Psoas muscle (tissue), 8 donors: ENCODE measurements at regions of chr11 and their contacts with region 1.

Region 1: GRCh38 chr11:73184953-73185671 is 33.0 kb upstream of the P2RY2 start:
- DNase-seq: peak; percentile 74 to 88
- ATAC-seq: peak; percentile 73 to 85 (median 80)
- H3K4me3 ChIP-seq: no peak overlapping the region
- H3K27ac ChIP-seq: peak overlapping the region; percentile 76
- H3K4me1 ChIP-seq: peaks cover 38% of the 10 kb centered on the region
- H3K27me3 ChIP-seq: no peaks in the 10 kb centered on the region
- CTCF ChIP-seq: peak; percentile 86

Region 2: GRCh38 chr11:72848846-72849466 is 336.2 kb before region 1 on chr11:
- intact Hi-C with region 1: no loop called
- DNase-seq: no peak
- ATAC-seq: peak in 1 of 4 donors; percentile 58
- H3K4me3 ChIP-seq: no peak overlapping the region
- H3K27ac ChIP-seq: no peak overlapping the region
- H3K4me1 ChIP-seq: no peaks in the 10 kb centered on the region
- H3K27me3 ChIP-seq: no peaks in the 10 kb centered on the region
- CTCF ChIP-seq: peak; percentile 50

Region 3: DNA sequence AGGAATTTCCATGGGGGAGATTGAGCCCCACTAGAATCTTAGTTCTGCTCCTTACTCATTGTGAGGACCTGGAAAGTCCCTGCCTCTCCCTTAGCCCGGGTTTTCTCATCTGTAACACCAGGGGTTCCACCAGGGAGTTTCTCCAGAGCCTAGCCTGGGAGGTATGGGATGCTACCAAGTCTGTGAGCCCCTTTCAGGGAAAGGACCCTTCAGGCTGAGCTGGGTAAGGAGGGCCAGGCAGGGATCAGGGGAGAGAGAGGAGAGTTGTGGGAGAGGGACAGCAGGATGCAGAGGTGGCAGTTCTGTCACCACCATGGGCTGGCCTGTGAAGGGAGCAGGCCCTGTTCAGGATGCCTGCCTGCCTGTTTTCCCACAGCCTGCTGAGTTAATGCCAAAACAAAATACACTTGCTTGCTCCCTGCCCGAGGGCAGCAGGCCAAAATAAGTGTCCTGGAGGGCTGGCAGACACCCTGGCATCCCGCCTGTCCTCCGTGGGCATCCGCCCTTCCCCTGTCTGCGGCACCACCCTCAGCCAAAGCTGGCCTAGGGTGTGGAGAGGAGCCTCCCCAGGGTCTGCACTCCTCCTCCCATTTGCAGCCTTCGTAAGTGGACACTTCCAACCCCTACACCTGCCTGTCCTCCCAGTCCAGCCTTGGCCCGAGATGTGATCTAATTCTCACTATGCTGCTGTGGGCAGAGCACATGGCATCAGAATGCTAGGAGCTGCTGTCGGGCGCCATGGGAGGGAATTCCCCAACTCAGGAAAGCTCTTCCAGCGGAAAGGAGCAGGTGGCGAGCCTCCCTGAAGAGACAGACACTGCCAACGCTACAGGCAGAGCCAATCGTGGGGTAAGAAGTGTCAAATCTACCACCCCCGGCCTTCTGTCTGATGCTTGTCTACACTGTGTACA is 37.1 kb before region 1 on chr11:
- intact Hi-C with region 1: loop called in 1 of 2 experiments (anchors 5 kb)
- DNase-seq: peak; percentile 48 to 82
- ATAC-seq: peak; percentile 72 to 86 (median 82)
- H3K4me3 ChIP-seq: peak overlapping the region; percentile 15
- H3K27ac ChIP-seq: peak overlapping the region; percentile 83
- H3K4me1 ChIP-seq: peaks cover 46% of the 10 kb centered on the region
- H3K27me3 ChIP-seq: no peaks in the 10 kb centered on the region
- CTCF ChIP-seq: no peak

Region 4: DNA sequence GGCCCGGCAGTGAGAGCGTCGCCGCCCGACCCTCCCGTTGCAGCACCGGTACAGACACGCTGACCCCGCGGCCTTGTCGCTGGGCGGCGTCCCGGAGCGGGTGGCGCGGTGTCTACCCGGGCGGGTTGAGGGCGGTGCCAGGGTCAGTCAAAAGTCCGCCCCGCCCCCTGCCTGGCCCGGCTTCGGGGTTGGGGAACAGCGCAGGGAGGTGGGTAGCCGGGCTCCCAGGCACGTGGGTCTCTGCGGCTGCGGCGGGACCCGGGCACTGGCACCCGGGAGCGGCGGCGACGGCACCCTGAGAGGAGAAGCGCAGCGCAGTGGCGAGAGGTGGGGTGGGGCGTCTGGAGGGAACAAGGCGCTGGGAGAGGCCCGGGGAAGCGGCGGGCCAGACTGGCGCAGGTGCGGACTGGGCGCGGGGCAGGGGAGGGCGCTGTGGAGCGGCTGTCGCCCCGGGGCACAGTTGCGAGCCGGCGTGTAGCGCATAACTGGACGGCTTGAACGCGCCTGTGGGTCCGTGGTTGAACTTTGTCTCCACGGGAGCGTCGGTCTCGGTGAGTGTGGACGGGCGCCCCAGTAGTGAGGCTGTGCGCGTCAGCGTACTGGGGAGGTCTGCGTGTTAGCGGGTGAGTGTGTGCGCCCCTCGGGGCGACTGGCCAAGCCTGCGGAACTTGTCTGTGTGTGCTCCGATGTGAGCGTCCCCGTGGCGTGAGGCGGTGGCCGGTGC is 33.2 kb after region 1 on chr11 and contains the start of gene P2RY2:
- intact Hi-C with region 1: no loop called
- DNase-seq: peak; percentile 91 to 95
- ATAC-seq: peak; percentile 77 to 81 (median 80)
- H3K4me3 ChIP-seq: peak within 1 kb of the TSS; percentile 82
- H3K27ac ChIP-seq: peak within 1 kb of the TSS; percentile 95
- H3K4me1 ChIP-seq: peaks cover 73% of the 10 kb centered on the region
- H3K27me3 ChIP-seq: no peaks in the 10 kb centered on the region
- CTCF ChIP-seq: peak; percentile 52
- total RNA-seq, gene P2RY2: 18.7 to 90.9 (median 43.8) TPM

Region 5: DNA sequence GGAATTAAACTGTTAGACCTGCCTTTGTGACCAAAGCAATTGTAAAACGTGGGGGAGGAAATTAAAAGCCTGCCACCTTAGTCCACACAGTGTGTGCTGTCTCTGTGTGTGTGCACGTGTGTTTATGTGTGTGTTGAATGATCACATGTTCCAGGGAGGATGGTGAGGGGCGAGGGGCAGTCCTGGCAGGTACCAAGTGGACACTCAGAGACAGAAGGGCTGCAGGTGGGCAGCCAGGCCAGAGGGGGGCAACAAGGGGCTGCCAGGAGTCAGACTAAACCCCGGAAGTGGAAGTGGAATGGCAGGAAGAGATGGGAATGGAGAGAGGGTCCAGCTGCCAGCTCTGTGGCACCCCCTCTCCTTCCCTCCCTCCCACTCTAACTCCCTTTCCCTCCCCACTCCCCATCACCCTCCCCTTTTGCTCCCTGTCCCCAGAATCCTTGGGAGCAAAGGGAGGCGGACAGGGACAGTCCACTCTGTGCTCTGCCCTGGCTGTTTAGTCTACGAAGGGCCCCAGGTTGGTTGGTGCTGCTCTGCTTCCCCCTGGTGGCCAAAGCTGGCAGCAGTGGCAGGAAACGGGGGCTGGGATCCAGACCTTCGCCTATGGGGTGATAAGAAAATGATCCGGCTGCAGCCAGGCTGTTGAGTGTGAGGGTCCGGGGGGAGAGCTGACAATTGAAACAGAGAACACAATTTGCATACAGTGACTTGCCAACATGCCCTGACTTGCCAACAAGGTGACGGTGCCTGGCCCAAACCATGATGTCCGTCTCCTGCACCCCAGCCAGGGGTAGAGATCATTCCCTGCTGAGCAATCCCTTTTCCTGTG is 57.4 kb after region 1 on chr11:
- intact Hi-C with region 1: loop called (anchors 1 to 2 kb)
- DNase-seq: peak; percentile 80 to 90
- ATAC-seq: peak; percentile 19 to 49 (median 40)
- H3K4me3 ChIP-seq: no peak overlapping the region
- H3K27ac ChIP-seq: peak overlapping the region; percentile 53
- H3K4me1 ChIP-seq: peaks cover 42% of the 10 kb centered on the region
- H3K27me3 ChIP-seq: no peaks in the 10 kb centered on the region
- CTCF ChIP-seq: peak; percentile 80

Region 6: GRCh38 chr11:73252577-73253195 is 67.6 kb after region 1 on chr11:
- intact Hi-C with region 1: no loop called
- DNase-seq: peak in 1 of 2 donors; percentile 28
- ATAC-seq: no peak
- H3K4me3 ChIP-seq: no peak overlapping the region
- H3K27ac ChIP-seq: no peak overlapping the region
- H3K4me1 ChIP-seq: peaks cover 14% of the 10 kb centered on the region
- H3K27me3 ChIP-seq: no peaks in the 10 kb centered on the region
- CTCF ChIP-seq: no peak

Region 7: GRCh38 chr11:73288873-73289707 is 104.0 kb after region 1 on chr11:
- intact Hi-C with region 1: loop called (anchors 1 to 5 kb)
- DNase-seq: peak; percentile 69 to 85
- ATAC-seq: peak; percentile 82 to 91 (median 90)
- H3K4me3 ChIP-seq: peak overlapping the region; percentile 46
- H3K27ac ChIP-seq: peak overlapping the region; percentile 32
- H3K4me1 ChIP-seq: peaks cover 6% of the 10 kb centered on the region
- H3K27me3 ChIP-seq: no peaks in the 10 kb centered on the region
- CTCF ChIP-seq: peak; percentile 95

Region 8: GRCh38 chr11:73335204-73335923 is 150.3 kb after region 1 on chr11:
- intact Hi-C with region 1: loop called in 1 of 2 experiments (anchors 5 kb)
- DNase-seq: peak; percentile 82 to 90
- ATAC-seq: peak; percentile 72 to 92 (median 84)
- H3K4me3 ChIP-seq: no peak overlapping the region
- H3K27ac ChIP-seq: peak overlapping the region; percentile 50
- H3K4me1 ChIP-seq: peaks cover 11% of the 10 kb centered on the region
- H3K27me3 ChIP-seq: no peaks in the 10 kb centered on the region
- CTCF ChIP-seq: peak; percentile 99

Region 9: GRCh38 chr11:73493956-73494598 is 309.0 kb after region 1 on chr11:
- intact Hi-C with region 1: no loop called
- DNase-seq: no peak
- ATAC-seq: peak; percentile 30 to 95 (median 90)
- H3K4me3 ChIP-seq: no peak overlapping the region
- H3K27ac ChIP-seq: no peak overlapping the region
- H3K4me1 ChIP-seq: peaks cover 14% of the 10 kb centered on the region
- H3K27me3 ChIP-seq: no peaks in the 10 kb centered on the region
- CTCF ChIP-seq: no peak